ENCODE measurements at regions of chr6 and their contacts with region 1.

Region 1: GRCh38 chr6:111011360-111012142 is 29.7 kb downstream of the RPF2 start:
- DNase-seq: peak; percentile 64
- H3K4me3 ChIP-seq: peak overlapping the region in 1 of 2 experiments; percentile 23; a peak in 1 of 4 replicates
- H3K27ac ChIP-seq: no peak overlapping the region
- H3K4me1 ChIP-seq: no peaks in the 10 kb centered on the region
- H3K27me3 ChIP-seq: no peaks in the 10 kb centered on the region
- CTCF ChIP-seq: peak; percentile 82
- EP300 ChIP-seq: no peak
- RAD21 ChIP-seq: peak; percentile 80

Region 2: GRCh38 chr6:110756817-110757216 is 254.7 kb before region 1 on chr6:
- CTCF ChIA-PET with region 1: no interaction called
- POLR2A ChIA-PET with region 1: no interaction called
- DNase-seq: no peak
- H3K4me3 ChIP-seq: no peak overlapping the region
- H3K27ac ChIP-seq: no peak overlapping the region
- H3K4me1 ChIP-seq: no peaks in the 10 kb centered on the region
- H3K27me3 ChIP-seq: no peaks in the 10 kb centered on the region
- CTCF ChIP-seq: no peak
- EP300 ChIP-seq: no peak
- RAD21 ChIP-seq: no peak

Region 3: GRCh38 chr6:110981202-110981600 is 30.4 kb before region 1 on chr6:
- CTCF ChIA-PET with region 1: interaction called, 12 read pairs
- POLR2A ChIA-PET with region 1: no interaction called
- DNase-seq: no peak
- H3K4me3 ChIP-seq: peak overlapping the region; percentile 82 to 91
- H3K27ac ChIP-seq: peak overlapping the region; percentile 9 to 86; a peak in 3 of 4 replicates
- H3K4me1 ChIP-seq: peaks cover 0 to 4% of the 10 kb centered on the region in 2 experiments; a peak in 1 of 4 replicates
- H3K27me3 ChIP-seq: no peaks in the 10 kb centered on the region
- CTCF ChIP-seq: no peak
- EP300 ChIP-seq: no peak
- RAD21 ChIP-seq: no peak

Region 4: GRCh38 chr6:110990840-110991576 is 20.5 kb before region 1 on chr6:
- CTCF ChIA-PET with region 1: interaction called, 15 read pairs
- POLR2A ChIA-PET with region 1: no interaction called
- DNase-seq: no peak
- H3K4me3 ChIP-seq: no peak overlapping the region
- H3K27ac ChIP-seq: no peak overlapping the region
- H3K4me1 ChIP-seq: no peaks in the 10 kb centered on the region
- H3K27me3 ChIP-seq: no peaks in the 10 kb centered on the region
- CTCF ChIP-seq: peak; percentile 32; the same call in 1 of the 2 replicates
- EP300 ChIP-seq: no peak
- RAD21 ChIP-seq: no peak

Region 5: GRCh38 chr6:110999634-111000270 is 11.8 kb before region 1 on chr6:
- CTCF ChIA-PET with region 1: interaction called, 16 read pairs
- POLR2A ChIA-PET with region 1: no interaction called
- DNase-seq: no peak
- H3K4me3 ChIP-seq: no peak overlapping the region
- H3K27ac ChIP-seq: peak overlapping the region in 1 of 2 experiments; percentile 21; a peak in 1 of 4 replicates
- H3K4me1 ChIP-seq: no peaks in the 10 kb centered on the region
- H3K27me3 ChIP-seq: no peaks in the 10 kb centered on the region
- CTCF ChIP-seq: peak; percentile 71
- EP300 ChIP-seq: no peak
- RAD21 ChIP-seq: peak; percentile 53

Region 6: GRCh38 chr6:111027219-111027618 is 15.7 kb after region 1 on chr6:
- CTCF ChIA-PET with region 1: interaction called, 27 read pairs
- POLR2A ChIA-PET with region 1: no interaction called
- DNase-seq: no peak
- H3K4me3 ChIP-seq: no peak overlapping the region
- H3K27ac ChIP-seq: no peak overlapping the region
- H3K4me1 ChIP-seq: peaks cover 0 to 3% of the 10 kb centered on the region in 2 experiments; a peak in 1 of 4 replicates
- H3K27me3 ChIP-seq: no peaks in the 10 kb centered on the region
- CTCF ChIP-seq: no peak
- EP300 ChIP-seq: no peak
- RAD21 ChIP-seq: no peak